ENCODE measurements at regions of chr1 and their contacts with region 1.

Region 1: DNA sequence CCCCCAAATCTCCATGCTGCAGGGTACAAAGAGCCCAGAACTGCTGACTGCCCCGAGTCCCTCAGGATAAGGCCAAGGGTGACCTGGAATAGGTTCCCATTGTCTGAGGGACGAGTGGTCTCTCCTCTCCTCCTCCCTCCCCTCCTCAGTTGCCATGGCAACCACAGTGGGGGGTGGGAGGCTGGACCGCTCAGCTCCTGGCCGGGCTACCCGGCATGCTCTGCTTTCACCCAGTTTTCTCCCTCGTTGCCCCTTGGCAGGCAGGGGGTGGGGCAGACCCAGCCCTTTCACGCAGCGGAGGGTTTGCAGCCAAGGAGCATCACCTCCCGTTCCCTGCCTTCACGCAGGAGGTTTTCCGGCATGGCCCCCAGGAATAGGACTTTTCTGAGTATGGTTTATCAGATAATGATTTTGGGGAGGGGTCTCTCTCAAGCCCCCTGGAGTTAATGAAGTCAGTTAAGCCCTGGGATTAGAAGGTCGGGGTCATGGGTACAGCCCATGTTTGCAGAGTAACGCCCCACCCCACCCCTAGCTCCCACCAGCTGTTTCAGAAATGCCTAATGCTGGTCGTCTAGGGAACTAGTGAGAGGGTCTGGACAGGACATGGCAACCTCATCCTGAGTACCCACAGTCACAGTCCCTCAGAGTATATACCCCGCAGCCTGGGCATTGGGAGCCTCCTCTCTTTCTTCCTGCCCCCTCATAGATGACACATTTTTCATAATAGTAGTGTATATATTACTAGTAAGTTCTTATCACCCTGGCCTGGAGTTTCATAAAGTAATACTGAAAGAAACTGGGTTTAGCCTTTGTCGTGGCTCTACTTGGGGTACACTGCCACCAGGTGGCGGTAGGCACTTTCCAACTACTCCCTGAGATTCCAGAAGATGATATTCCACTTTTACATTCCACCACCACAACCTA is 20.7 kb downstream of the C1QB start:
- DNase-seq: peak in 1 of 5 donors; percentile 29
- ATAC-seq: peak in 2 of 4 donors; percentile 14 to 44
- H3K4me3 ChIP-seq: no peak overlapping the region
- H3K27ac ChIP-seq: no peak overlapping the region
- H3K4me1 ChIP-seq: no peaks in the 10 kb centered on the region
- H3K27me3 ChIP-seq: peaks cover 3 to 59% (median 22%) of the 10 kb centered on the region in 9 donors
- CTCF ChIP-seq: peak; percentile 40 to 68 (median 59)
- POLR2A ChIP-seq: no peak

Region 2: DNA sequence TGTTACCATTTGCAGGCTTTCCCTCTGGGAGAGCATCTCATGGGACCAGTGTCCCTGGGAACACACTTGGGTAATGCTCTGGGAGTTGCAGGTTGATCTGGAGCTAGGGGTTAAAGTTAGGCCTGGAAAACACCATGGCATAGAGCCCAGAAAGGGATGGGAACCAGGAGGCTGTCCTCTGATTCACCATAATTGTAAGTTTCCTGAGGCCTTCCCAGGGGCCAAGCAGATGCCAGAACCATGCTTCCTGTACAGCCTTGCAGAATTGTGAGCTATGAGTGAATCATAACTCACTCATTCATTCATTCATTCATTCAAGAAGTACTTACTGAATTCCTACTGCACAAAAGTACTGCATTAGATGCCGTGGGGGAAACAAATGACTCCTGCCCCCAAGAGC is 248.9 kb after region 1 on chr1:
- intact Hi-C with region 1: loop called in 1 of 10 experiments (anchors 10 kb)
- DNase-seq: no peak
- ATAC-seq: no peak
- H3K4me3 ChIP-seq: no peak overlapping the region
- H3K27ac ChIP-seq: no peak overlapping the region
- H3K4me1 ChIP-seq: peaks cover 0 to 19% (median 0%) of the 10 kb centered on the region in 12 donors
- H3K27me3 ChIP-seq: peaks cover 0 to 14% (median 0%) of the 10 kb centered on the region in 9 donors
- CTCF ChIP-seq: no peak
- POLR2A ChIP-seq: no peak

Region 3: DNA sequence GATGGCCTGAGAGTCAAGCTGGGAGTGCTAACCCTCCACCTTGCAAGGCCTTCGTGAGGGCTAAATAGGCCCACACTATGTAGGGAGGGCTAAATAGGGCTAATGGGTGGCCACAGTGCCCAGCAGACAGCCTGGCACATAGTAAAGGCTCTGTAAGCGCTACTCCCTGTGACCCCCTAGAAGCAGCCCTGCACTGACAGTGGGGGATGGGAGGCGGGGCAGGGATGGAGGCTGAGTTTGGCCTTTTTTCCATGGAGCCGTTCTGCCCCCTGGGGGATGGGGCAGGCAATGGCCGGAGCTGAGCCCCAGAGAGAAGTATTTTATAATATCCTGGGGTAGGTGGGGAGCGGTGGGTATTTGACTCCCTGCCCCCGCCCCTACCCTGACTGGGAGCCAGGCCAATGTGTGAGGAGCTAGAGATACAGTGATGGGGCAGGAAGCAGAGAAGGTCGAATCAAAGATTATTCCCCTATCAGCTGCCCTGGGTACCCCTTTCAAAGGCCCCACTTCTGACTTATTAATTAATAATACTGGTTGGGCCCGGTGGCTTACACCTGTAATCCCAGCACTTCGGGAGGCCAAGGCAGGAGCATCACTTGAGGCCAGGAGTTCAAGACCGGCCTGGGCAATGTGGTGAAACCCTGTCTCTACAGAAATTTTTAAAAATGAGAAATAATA is 256.6 kb after region 1 on chr1:
- intact Hi-C with region 1: loop called in 8 of 10 experiments (anchors 1 to 10 kb)
- DNase-seq: peak; percentile 28 to 70 (median 39)
- ATAC-seq: peak; percentile 51 to 85 (median 79)
- H3K4me3 ChIP-seq: no peak overlapping the region
- H3K27ac ChIP-seq: no peak overlapping the region
- H3K4me1 ChIP-seq: no peaks in the 10 kb centered on the region
- H3K27me3 ChIP-seq: peaks cover 0 to 19% (median 0%) of the 10 kb centered on the region in 9 donors
- CTCF ChIP-seq: peak; percentile 34 to 71 (median 64)
- POLR2A ChIP-seq: no peak

Measured in heart left ventricle (tissue), 16 donors.